ENCODE measurements at regions of chr6 and their contacts with region 1.

Region 1: DNA sequence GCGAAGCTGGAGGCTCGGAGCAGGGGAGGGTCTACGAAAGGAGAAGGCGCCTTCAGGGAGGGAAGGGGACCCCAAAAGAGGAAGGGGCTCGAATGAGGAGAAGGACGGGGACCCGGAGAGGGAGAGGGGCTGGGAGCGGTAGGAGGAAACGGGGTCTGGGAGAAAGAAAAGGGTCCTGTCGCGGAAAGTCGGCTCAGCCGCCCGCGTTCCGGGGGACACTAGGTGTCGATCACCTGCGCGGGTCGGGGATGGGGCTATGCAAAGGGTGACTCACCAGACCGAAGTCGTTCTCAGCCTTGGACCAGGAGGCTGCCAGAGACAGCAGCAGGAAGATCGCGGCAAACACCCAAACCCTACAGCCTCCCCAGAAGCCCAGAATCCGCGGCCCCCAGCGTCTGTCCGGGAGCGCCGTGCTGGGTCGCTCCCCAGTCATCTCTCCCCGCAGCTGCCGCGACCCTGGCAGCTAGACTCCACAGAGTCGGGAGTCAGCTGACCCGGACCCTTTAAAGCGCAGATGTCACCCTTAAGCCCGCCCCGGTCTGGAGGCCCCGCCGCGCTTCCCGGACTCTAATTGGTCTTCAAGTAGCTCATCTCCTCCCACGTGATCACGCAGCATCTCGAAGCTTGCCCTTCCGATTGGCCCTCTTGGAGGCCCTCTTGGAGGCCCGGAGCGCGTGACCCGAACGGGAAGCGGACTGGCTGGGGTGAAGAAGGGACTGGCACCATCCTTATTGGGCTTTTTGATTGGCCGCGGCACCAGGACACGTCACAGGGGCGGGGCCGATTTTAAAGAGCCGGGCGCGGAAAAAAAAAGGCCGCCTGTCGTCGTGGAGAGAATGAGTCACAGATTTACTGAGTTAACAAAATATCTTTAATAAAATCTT is at the start of gene NEU1:
- DNase-seq: peak; percentile 100
- ATAC-seq: peak; percentile 97
- H3K4me3 ChIP-seq: peak within 1 kb of the TSS; percentile 69 to 92 (median 82)
- H3K27ac ChIP-seq: peak within 1 kb of the TSS; percentile 83 to 91 (median 88)
- H3K4me1 ChIP-seq: peaks cover 20 to 22% of the 10 kb centered on the region in 2 donors
- H3K27me3 ChIP-seq: no peaks in the 10 kb centered on the region
- CTCF ChIP-seq: no peak
- POLR2A ChIP-seq: peak; percentile 97 to 99
- total RNA-seq, gene NEU1: 20.8 to 42.7 (median 38.1) TPM

Region 2: GRCh38 chr6:31546962-31547726 is 315.4 kb before region 1 on chr6 and contains the start of gene NFKBIL1:
- in situ Hi-C with region 1: no loop called
- intact Hi-C with region 1: loop called (anchors 5 kb)
- DNase-seq: peak; percentile 96
- ATAC-seq: peak; percentile 97 to 98
- H3K4me3 ChIP-seq: peak within 1 kb of the TSS; percentile 48 to 72 (median 63)
- H3K27ac ChIP-seq: peak within 1 kb of the TSS; percentile 86 to 97 (median 90)
- H3K4me1 ChIP-seq: peaks cover 20 to 22% of the 10 kb centered on the region in 2 donors
- H3K27me3 ChIP-seq: no peaks in the 10 kb centered on the region
- CTCF ChIP-seq: peak in 1 of 5 experiments; percentile 13
- POLR2A ChIP-seq: peak; percentile 64 to 68
- total RNA-seq, gene NFKBIL1: 17.6 to 21.7 (median 20.3) TPM

Region 3: DNA sequence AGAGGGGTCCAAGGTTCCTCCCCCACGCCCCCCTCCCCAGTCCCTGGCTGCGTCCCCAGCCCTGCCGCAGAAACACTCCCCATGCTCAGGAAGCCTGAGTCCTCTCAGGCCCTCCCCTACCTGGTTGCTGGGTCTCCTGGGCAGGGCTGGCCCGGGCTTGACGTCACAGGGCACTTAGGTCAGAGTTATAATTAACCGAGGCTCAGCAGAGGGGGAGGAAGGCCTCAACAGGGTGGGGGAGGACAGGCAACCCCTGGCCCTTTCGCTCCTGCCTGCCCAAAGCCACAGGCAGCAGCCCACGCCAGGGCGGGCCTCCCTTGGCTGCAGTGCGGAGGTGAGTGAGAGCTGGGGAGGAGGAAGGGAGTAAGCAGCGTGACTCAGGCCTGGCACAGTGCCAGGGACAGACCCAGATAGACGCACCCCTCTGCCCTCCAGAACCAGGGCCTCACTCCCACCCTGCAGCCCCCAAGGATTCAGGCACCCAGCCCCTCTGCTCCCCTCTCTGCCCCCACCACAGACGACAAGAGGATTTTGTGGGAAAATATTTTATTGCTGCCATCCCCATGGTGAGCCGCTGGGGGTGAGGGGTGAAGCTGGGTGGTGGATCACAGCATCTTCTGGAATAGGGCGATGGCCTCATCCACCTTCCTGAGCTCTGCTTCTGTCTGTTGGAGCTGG is 85.5 kb before region 1 on chr6 and contains the start of gene VWA7:
- in situ Hi-C with region 1: no loop called
- intact Hi-C with region 1: loop called (anchors 10 kb)
- DNase-seq: peak; percentile 45 to 89
- ATAC-seq: peak; percentile 70 to 89
- H3K4me3 ChIP-seq: peak within 1 kb of the TSS; percentile 26 to 44 (median 37)
- H3K27ac ChIP-seq: peak within 1 kb of the TSS; percentile 83 to 88 (median 86)
- H3K4me1 ChIP-seq: peaks cover 11 to 17% of the 10 kb centered on the region in 2 donors
- H3K27me3 ChIP-seq: no peaks in the 10 kb centered on the region
- CTCF ChIP-seq: no peak
- POLR2A ChIP-seq: peak in 1 of 2 donors; percentile 31
- total RNA-seq, gene VWA7: 2.0 to 7.8 (median 4.7) TPM

Region 4: DNA sequence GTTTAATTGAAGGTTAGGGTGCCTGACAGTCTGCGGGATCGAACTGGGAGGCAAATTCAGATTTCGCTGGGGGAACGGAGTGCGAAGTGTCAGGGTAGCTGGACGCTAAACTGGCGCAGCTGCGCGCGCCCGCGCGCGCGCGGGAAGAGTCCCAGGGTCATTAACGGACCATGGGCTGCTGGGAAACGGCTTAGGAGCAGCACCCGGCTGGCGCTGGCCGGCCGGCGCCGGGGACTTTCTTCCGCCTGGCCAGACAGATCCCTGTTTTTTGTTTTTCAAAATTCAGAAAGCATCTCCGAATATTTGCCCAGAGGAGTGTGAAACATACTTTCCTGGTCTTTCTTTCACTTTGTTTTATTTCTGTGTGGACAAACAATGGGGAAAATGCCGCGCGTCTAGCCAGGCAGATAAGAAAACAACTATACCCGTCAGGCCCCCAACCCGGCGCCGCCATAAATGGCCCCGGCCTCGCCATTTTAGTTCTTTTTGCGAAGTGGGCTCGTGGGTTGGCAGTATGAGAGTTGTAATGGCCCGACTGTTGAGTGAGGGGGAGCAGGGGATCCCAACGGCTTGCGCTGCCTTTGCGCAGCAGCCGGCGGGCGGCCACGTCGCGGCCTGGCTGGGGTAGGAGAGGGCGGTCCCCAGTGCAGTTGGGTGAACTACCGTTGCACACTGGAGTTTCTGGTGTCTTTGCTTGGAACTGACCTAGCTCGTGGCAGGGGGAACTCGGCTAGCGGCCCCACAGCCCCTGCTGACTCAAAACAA is 28.0 kb before region 1 on chr6:
- in situ Hi-C with region 1: no loop called
- intact Hi-C with region 1: loop called (anchors 2 kb)
- DNase-seq: peak; percentile 76 to 87
- ATAC-seq: peak; percentile 86 to 87
- H3K4me3 ChIP-seq: peak overlapping the region; percentile 68 to 96 (median 84)
- H3K27ac ChIP-seq: peak overlapping the region; percentile 87 to 97 (median 92)
- H3K4me1 ChIP-seq: peaks cover 40 to 47% of the 10 kb centered on the region in 2 donors
- H3K27me3 ChIP-seq: no peaks in the 10 kb centered on the region
- CTCF ChIP-seq: peak in 1 of 5 experiments; percentile 9
- POLR2A ChIP-seq: peak; percentile 73 to 74

Region 5: DNA sequence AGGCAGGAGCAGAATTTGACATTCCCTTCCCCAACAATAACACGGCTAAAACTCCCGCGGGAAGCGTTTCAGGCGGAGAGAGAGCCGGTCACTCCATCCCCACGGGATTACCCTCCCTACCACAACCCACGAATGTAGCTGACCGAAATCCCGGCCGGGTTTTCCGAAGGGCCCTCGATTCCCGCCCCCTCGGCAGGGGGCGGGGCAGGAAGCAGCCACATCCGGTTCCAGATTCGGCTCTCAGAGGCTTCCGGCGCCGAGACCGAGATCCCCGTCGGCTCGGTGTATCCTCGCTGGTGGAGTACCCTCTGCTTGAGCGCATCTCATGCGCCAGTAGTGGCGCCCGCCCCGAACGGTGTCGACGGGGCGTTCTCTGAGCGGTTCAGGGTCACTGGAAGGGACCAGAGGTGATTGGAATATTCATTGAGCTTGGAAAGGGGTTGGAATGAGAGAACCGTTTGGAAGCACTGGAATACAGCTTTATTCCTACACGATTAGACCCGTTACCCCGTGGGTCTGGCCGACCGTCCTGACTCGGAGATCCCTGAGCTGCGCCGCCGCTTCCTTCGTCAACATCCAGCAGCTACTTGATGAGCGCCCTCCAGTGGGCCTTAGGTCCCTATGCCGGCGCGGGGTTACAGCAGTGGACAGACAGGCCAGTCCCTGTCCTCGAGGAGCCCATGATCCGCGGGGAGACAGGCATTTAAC is 1436.8 kb after region 1 on chr6:
- in situ Hi-C with region 1: loop called in 1 of 4 experiments (anchors 25 kb)
- intact Hi-C with region 1: no loop called
- DNase-seq: peak; percentile 84 to 89
- ATAC-seq: peak; percentile 90 to 93
- H3K4me3 ChIP-seq: peak overlapping the region; percentile 71 to 86 (median 80)
- H3K27ac ChIP-seq: peak overlapping the region; percentile 96 to 99 (median 97)
- H3K4me1 ChIP-seq: peaks cover 11 to 23% of the 10 kb centered on the region in 2 donors
- H3K27me3 ChIP-seq: no peaks in the 10 kb centered on the region
- CTCF ChIP-seq: peak; percentile 55 to 85 (median 80)
- POLR2A ChIP-seq: peak; percentile 78 to 86